Activated naive CD4-positive, alpha-beta T cell treated with anti-CD3 and anti-CD28 coated beads, Interleukin-2, amount 10 ng/mL, durations not matched to agents 7 days and 5 days (primary cell): ENCODE measurements at regions of chr10 and their contacts with region 1.

Region 1: GRCh38 chr10:67788025-67788886 is 49.7 kb downstream of the DNAJC12 start:
- DNase-seq: peak; percentile 80
- H3K4me3 Mint-ChIP-seq: no peak overlapping the region
- H3K27ac Mint-ChIP-seq: no peak overlapping the region
- H3K4me1 Mint-ChIP-seq: peaks cover 53% of the 10 kb centered on the region
- H3K27me3 Mint-ChIP-seq: no peaks in the 10 kb centered on the region

Region 2: DNA sequence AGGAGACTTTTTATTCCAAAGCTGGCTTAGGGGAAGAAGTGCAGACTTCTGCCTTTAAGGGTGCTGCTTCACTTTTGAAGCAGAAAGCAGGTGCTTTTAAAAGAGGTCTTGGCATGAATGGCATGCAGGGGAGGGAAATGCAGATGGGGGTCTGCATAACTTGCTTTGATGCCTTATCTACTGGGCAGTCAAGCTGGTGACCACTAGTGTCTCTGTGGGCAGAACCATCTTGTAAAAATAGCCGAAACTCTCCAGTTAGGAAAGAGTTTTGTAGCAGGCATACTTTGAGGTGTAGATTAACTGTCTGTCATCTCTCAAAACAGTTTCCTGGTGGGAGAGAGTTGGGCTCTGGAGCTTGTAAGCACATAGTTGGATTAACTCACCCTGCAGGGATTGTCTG is 82.3 kb before region 1 on chr10:
- CTCF ChIA-PET with region 1: no interaction called
- DNase-seq: no peak
- H3K4me3 Mint-ChIP-seq: no peak overlapping the region
- H3K27ac Mint-ChIP-seq: no peak overlapping the region
- H3K4me1 Mint-ChIP-seq: no peaks in the 10 kb centered on the region
- H3K27me3 Mint-ChIP-seq: no peaks in the 10 kb centered on the region

Region 3: DNA sequence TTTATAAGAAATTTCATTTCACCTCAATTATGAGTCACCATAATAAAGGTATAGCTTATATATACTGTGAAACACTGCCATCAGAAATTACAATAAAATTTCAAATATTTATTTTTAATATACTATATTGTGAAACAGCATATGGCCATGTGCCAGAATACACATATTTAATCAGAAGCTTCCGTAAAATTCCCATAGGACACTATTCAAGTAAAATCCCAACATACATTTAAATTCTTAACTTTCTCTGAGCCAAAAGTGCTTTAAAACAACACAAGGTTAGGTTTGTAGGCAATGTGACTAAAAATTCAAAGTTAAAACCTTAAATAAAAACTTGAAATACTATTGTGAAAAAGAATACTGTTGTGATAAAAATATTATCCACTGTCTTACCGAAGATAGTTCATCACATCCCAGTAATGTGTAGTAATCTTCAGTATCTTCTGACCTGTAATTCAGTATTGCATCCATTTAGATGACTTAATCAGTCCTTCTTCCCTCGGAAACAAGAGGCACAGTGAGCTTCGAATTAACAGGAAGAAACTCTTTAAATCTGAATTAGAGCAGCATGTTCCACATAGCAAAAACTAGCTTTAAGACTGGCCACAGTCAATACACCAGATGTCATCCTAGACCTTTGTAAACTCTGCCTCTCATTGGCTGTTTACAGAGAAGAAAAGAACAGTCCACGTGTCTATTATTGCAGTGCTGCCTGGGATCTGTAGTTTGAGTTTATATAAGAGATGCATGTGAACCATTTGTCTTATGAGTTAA is 49.5 kb after region 1 on chr10 and contains the start of gene DNAJC12:
- CTCF ChIA-PET with region 1: interaction called, 13 read pairs
- DNase-seq: no peak
- H3K4me3 Mint-ChIP-seq: no peak within 1 kb of the TSS
- H3K27ac Mint-ChIP-seq: no peak within 1 kb of the TSS
- H3K4me1 Mint-ChIP-seq: peaks cover 4% of the 10 kb centered on the region
- H3K27me3 Mint-ChIP-seq: no peaks in the 10 kb centered on the region

Region 4: GRCh38 chr10:67884313-67884841 is 96.1 kb after region 1 on chr10 and contains the start of gene SIRT1:
- CTCF ChIA-PET with region 1: interaction called, 15 read pairs
- DNase-seq: peak; percentile 94
- H3K4me3 Mint-ChIP-seq: peak within 1 kb of the TSS; percentile 83
- H3K27ac Mint-ChIP-seq: peak within 1 kb of the TSS; percentile 95
- H3K4me1 Mint-ChIP-seq: peaks cover 32% of the 10 kb centered on the region
- H3K27me3 Mint-ChIP-seq: peaks cover 3% of the 10 kb centered on the region

Region 5: DNA sequence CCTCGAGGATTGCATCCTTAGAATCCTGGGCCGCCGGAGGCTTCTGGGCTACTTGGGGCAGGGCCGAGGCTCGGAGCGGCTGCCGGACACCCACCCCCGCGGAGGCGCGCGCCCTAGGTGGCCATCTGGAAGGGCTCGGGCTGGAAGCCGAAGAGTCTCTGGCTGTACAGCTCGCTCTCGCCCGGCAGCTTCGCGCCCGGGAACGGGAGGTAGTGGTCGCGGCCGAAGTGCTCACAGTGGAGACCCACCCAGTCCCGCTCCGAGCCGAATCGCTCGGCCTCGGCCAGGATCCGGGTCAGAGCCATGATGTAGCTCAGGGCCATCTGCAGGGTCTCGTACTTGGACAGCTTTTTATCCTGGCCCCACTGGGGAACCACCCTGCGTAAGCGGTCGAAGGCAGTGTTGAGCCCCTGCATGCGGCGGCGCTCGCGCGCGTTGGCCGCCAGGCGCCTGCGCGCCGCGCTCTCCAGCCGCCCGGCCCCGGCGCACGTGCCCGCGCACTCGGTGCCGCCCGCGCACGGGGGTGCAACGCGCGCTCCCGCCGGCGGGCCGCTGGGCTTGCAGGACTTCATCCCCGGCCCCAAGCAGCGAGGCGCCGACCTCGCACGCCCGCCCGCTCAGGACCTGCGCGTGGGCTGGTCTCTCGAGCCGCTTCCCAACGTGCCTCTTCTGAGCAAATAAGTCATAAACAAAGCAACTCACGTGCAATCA is 443.0 kb after region 1 on chr10:
- CTCF ChIA-PET with region 1: no interaction called
- DNase-seq: peak; percentile 46
- H3K4me3 Mint-ChIP-seq: peak overlapping the region; percentile 53
- H3K27ac Mint-ChIP-seq: no peak overlapping the region
- H3K4me1 Mint-ChIP-seq: peaks cover 7% of the 10 kb centered on the region
- H3K27me3 Mint-ChIP-seq: peaks cover 51% of the 10 kb centered on the region

Region 6: DNA sequence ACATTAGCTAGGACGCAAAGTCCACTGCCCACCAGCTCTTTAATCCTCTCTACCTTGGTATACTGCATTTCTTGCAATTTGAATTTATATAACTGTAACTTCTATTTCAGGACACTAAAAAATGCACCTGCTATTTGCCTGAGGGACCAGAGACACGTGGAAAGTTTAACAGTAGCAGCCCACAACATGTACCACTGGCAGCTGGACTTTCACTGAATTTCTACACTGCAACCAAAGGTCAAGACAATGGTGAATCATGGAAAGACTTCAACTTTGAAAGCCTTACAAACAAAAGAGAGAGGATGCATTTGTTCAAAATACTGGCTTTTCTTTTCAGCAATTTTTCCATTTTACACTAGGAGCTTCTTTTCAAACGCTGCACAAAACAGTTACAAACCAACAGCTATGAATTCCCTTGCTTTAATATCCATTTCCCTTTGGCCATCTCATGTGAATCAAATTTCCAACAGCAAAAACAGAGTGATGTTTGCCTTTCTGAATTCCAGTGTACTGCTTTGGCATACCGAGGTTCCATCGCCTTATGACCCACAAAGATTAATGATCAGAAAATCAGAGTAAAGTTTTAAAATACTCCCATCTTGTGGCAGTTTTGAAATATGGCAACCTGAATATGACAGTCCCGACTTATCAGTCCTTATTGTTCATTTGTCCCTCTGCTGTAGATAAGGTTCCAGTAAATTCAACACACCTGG is 513.7 kb after region 1 on chr10:
- CTCF ChIA-PET with region 1: interaction called, 20 read pairs
- DNase-seq: no peak
- H3K4me3 Mint-ChIP-seq: no peak overlapping the region
- H3K27ac Mint-ChIP-seq: no peak overlapping the region
- H3K4me1 Mint-ChIP-seq: no peaks in the 10 kb centered on the region
- H3K27me3 Mint-ChIP-seq: no peaks in the 10 kb centered on the region